ENCODE measurements at regions of chr3 and their contacts with region 1.

Region 1: DNA sequence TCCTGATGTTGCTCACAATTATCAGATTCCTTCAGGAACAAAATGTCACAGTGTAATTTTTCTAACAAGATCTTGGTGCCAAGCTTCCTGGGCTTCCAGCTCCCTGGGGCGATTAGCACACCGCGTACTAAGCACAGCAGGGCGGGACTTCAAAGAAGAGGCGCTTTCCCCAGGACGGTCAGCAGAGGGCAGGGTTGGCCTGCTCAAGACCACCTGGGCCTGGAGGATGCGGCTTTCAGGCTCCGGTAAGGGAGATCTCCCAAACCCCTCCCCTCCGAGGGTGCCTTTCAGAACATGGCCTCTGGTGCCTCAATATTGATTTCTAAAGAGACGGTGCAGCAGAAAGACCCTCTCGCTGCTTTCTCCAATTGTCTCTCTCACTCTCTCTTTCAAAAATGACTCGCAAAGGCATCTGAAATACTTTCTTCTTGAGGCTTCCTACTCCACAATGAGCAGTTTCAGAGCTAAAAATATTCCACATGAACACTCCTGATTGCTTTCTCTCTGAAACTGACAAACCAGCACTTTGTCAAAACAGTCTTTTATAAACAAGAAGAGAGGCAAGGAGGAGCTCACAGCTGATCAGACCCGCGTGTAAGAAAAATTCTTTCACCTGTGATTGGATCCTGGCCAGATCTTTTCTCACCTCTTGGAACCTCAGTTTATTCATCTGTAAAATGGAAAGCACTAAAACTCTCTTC is 154.0 kb downstream of the ADAMTS9 start:
- DNase-seq: peak; percentile 85
- H3K4me3 ChIP-seq: peak overlapping the region; percentile 28
- H3K27ac ChIP-seq: peak overlapping the region; percentile 48
- H3K4me1 ChIP-seq: peaks cover 22% of the 10 kb centered on the region
- H3K27me3 ChIP-seq: no peaks in the 10 kb centered on the region
- CTCF ChIP-seq: peak; percentile 91

Region 2: GRCh38 chr3:64327100-64327804 is 206.5 kb before region 1 on chr3:
- intact Hi-C with region 1: no loop called
- DNase-seq: peak; percentile 77
- H3K4me3 ChIP-seq: peak overlapping the region; percentile 23
- H3K27ac ChIP-seq: peak overlapping the region; percentile 82
- H3K4me1 ChIP-seq: peaks cover 6% of the 10 kb centered on the region
- H3K27me3 ChIP-seq: no peaks in the 10 kb centered on the region
- CTCF ChIP-seq: no peak

Region 3: GRCh38 chr3:65168547-65168946 is 634.8 kb after region 1 on chr3:
- intact Hi-C with region 1: loop called (anchors 10 kb)
- DNase-seq: no peak
- H3K4me3 ChIP-seq: no peak overlapping the region
- H3K27ac ChIP-seq: peak overlapping the region; percentile 77
- H3K4me1 ChIP-seq: peaks cover 30% of the 10 kb centered on the region
- H3K27me3 ChIP-seq: peaks cover 4% of the 10 kb centered on the region
- CTCF ChIP-seq: no peak

Region 4: DNA sequence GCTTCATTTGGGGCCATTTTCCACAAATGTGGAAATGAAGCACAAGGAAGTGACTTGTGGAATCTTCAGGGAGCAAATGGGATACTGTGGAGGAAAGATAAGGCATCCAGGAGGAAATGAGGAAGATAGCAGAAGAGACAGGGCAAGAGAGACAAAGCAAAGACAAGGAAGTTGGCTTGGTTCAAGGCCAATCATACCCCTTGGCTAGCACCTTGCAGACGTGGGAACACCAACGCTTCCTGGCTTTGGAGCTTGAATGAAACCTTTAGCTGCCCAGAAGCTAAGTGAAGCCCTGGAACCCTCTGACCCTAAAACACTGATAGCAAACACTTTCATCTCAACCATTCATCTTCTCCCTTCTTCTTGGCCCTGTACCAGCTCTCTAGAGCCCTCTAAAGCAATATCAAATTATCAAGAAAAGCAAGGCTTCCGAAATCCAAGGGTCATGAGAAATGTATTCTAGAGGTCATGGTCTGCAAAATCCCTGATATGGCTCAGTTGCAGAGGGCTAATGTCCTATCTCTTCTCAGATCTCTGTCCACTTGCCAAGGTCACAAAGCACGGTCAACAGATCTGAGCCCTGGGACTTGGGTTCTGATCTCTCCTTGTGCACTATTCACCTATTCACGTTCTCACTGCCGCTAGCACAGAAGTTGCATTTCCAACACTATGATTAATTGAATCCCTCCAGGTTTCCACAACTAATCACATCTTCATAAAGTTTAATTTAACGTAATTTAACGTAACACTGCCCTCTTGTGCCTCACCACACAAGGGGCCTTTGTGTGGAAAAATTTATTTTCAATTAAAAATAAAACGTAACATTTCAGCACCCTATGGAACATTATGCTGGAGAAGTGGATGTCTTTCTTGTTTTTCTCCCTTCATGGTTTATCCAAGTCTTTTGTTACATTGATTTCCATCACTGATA is 711.6 kb after region 1 on chr3:
- intact Hi-C with region 1: loop called (anchors 10 kb)
- DNase-seq: no peak
- H3K4me3 ChIP-seq: no peak overlapping the region
- H3K27ac ChIP-seq: no peak overlapping the region
- H3K4me1 ChIP-seq: peaks cover 7% of the 10 kb centered on the region
- H3K27me3 ChIP-seq: no peaks in the 10 kb centered on the region
- CTCF ChIP-seq: peak; percentile 59

Region 5: DNA sequence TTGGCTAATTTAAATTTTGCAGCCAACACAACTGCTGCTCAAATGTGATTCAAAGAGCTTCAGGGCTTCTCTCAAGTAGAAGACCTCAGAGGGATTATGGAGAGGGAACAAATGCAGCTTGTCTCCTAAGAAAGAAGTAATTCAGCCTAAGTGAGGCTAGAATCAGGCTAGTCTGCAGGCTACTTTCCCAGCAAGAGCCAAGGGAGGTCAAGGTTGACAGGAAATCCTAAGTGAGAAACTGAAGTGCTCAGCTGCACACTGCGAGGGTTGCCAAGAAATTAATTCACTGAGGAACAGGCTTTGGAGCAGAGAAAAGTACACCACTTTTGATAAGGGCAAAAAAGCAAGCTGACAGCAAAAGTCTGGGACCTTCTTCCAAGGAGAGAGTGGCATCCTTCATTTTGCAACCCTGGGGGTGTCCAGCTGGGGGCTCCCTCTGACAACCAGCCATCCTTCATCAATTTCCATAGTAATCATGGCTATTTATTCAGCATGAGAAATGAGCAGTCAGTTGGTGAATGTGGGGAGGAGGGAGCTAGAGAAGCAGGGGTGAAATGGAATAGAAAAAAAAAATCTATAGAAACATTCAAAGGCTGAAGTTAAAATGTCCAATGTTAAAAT is 800.4 kb after region 1 on chr3:
- intact Hi-C with region 1: loop called (anchors 10 kb)
- DNase-seq: no peak
- H3K4me3 ChIP-seq: no peak overlapping the region
- H3K27ac ChIP-seq: peak overlapping the region; percentile 43
- H3K4me1 ChIP-seq: peaks cover 21% of the 10 kb centered on the region
- H3K27me3 ChIP-seq: no peaks in the 10 kb centered on the region
- CTCF ChIP-seq: peak; percentile 43

Measured in left ventricle myocardium inferior (tissue), 1 donor.